ENCODE measurements at regions of chr2 and their contacts with region 1.

Region 1: GRCh38 chr2:29841386-29842004 is 79.9 kb downstream of the ALK start:
- DNase-seq: peak in 1 of 2 donors; percentile 13
- ATAC-seq: peak in 1 of 2 donors; percentile 61
- H3K4me3 ChIP-seq: no peak overlapping the region
- H3K27ac ChIP-seq: no peak overlapping the region
- H3K4me1 ChIP-seq: no peaks in the 10 kb centered on the region
- H3K27me3 ChIP-seq: no peaks in the 10 kb centered on the region
- CTCF ChIP-seq: peak; percentile 45 to 78 (median 61)
- POLR2A ChIP-seq: no peak

Region 2: DNA sequence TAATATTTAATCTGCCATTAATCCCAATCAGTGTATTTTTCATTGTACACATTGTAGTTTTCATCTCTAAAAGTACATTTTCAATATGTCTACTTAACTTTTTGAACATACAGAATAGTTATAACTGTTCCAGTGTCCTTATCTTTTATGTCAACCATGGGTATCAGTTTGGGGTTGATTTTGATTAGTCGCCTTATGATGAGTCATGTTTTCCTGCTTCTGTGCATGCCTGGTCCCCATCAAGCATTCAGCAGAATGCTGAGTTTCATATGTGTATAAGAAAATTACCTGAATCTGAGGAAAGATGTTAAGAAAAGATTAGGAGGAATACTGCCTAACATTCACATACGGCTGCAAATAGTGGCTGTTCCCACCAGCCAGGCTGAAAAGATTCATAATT is 1013.1 kb before region 1 on chr2:
- in situ Hi-C with region 1: loop called in 1 of 4 experiments (anchors 25 kb)
- intact Hi-C with region 1: no loop called
- DNase-seq: no peak
- ATAC-seq: no peak
- H3K4me3 ChIP-seq: no peak overlapping the region
- H3K27ac ChIP-seq: no peak overlapping the region
- H3K4me1 ChIP-seq: no peaks in the 10 kb centered on the region
- H3K27me3 ChIP-seq: no peaks in the 10 kb centered on the region
- CTCF ChIP-seq: no peak
- POLR2A ChIP-seq: no peak

Region 3: GRCh38 chr2:28958689-28959088 is 882.8 kb before region 1 on chr2:
- in situ Hi-C with region 1: loop called in 2 of 4 experiments (anchors 10 to 25 kb)
- intact Hi-C with region 1: loop called (anchors 2 kb)
- DNase-seq: peak; percentile 74 to 84
- ATAC-seq: peak; percentile 87 to 88
- H3K4me3 ChIP-seq: peak overlapping the region in 2 of 4 donors; percentile 2 to 6
- H3K27ac ChIP-seq: peak overlapping the region; percentile 67 to 86 (median 80)
- H3K4me1 ChIP-seq: peaks cover 6 to 10% of the 10 kb centered on the region in 2 donors
- H3K27me3 ChIP-seq: no peaks in the 10 kb centered on the region
- CTCF ChIP-seq: peak; percentile 75 to 86 (median 81)
- POLR2A ChIP-seq: peak; percentile 52 to 53

Region 4: GRCh38 chr2:29309090-29310029 is 532.1 kb before region 1 on chr2:
- in situ Hi-C with region 1: loop called in 1 of 4 experiments (anchors 10 kb)
- intact Hi-C with region 1: loop called (anchors 2 kb)
- DNase-seq: no peak
- ATAC-seq: peak; percentile 65 to 78
- H3K4me3 ChIP-seq: no peak overlapping the region
- H3K27ac ChIP-seq: no peak overlapping the region
- H3K4me1 ChIP-seq: no peaks in the 10 kb centered on the region
- H3K27me3 ChIP-seq: no peaks in the 10 kb centered on the region
- CTCF ChIP-seq: peak; percentile 23 to 66 (median 57)
- POLR2A ChIP-seq: no peak

Measured in gastrocnemius medialis (tissue), 4 donors.